ENCODE measurements at regions of chr16 and their contacts with region 1.

Region 1: GRCh38 chr16:57720142-57720575 is 15.4 kb upstream of the KATNB1 start:
- DNase-seq: peak; percentile 53
- H3K4me3 ChIP-seq: no peak overlapping the region
- H3K27ac ChIP-seq: no peak overlapping the region
- H3K4me1 ChIP-seq: no peaks in the 10 kb centered on the region
- H3K27me3 ChIP-seq: peaks cover 0 to 6% of the 10 kb centered on the region in 2 experiments
- CTCF ChIP-seq: peak; percentile 70 to 83
- POLR2A ChIP-seq: no peak

Region 2: GRCh38 chr16:57675741-57676584 is 44.2 kb before region 1 on chr16:
- CTCF ChIA-PET with region 1: no interaction called
- POLR2A ChIA-PET with region 1: no interaction called
- dilution Hi-C with region 1: no loop called
- intact Hi-C with region 1: no loop called
- DNase-seq: no peak
- H3K4me3 ChIP-seq: no peak overlapping the region
- H3K27ac ChIP-seq: no peak overlapping the region
- H3K4me1 ChIP-seq: peaks cover 7% of the 10 kb centered on the region
- H3K27me3 ChIP-seq: peaks cover 11 to 14% of the 10 kb centered on the region in 2 experiments
- CTCF ChIP-seq: no peak
- POLR2A ChIP-seq: no peak

Region 3: DNA sequence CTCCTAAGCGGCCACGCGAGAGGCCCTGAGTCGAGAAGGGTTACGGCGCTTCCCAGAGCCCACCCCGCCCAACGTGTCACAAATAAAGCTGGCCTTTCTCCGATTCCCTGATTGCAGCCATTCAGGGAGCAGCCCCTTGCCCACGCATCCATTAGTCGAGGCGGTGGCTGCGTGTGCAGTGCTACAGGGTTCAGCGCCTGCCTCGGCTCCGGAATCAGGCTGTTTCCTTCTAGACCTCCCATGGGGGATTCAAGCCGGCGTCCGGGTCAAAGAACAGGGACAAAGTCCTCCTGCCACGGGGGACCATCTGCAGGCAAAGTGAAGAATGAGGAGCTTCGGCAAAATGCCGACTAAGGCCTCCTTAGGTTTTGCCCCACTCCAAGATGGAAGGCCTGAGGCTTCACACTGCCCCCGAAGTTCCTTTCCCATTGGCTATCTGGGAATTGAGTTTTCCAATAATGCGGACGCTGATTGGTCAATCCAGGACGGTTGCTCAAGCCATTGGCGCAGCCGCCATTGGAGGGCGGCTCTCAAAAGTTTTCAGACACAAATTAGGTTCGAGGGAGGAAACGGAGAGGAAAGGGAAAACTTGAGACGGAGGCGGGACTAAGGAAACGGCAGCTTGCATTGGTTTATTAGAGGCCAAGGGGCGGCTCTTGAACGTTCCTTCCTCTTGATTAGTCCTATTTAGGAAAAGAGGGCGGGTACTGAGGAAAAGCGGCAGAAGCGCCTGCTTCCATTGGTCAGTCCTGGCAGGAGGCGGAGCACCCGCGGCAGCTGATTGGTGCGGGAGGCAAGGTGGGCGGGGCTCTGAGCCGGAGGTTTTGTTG is 15.0 kb after region 1 on chr16:
- CTCF ChIA-PET with region 1: interaction called, 43 read pairs
- POLR2A ChIA-PET with region 1: no interaction called
- dilution Hi-C with region 1: no loop called
- intact Hi-C with region 1: no loop called
- DNase-seq: peak; percentile 100
- H3K4me3 ChIP-seq: peak overlapping the region; percentile 72 to 93 (median 74)
- H3K27ac ChIP-seq: peak overlapping the region; percentile 81
- H3K4me1 ChIP-seq: peaks cover 19% of the 10 kb centered on the region
- H3K27me3 ChIP-seq: no peaks in the 10 kb centered on the region
- CTCF ChIP-seq: no peak
- POLR2A ChIP-seq: peak; percentile 58

Measured in endothelial cell of umbilical vein (primary cell).